BJ (cell line): ENCODE measurements at regions of chr17 and their contacts with region 1.

Region 1: GRCh38 chr17:27353461-27354050 is 59.6 kb downstream of the WSB1 start:
- DNase-seq: peak; percentile 46
- H3K4me3 ChIP-seq: peak overlapping the region; percentile 77
- H3K27me3 ChIP-seq: no peaks in the 10 kb centered on the region
- CTCF ChIP-seq: peak; percentile 18; the same call in 1 of the 2 replicates

Region 2: DNA sequence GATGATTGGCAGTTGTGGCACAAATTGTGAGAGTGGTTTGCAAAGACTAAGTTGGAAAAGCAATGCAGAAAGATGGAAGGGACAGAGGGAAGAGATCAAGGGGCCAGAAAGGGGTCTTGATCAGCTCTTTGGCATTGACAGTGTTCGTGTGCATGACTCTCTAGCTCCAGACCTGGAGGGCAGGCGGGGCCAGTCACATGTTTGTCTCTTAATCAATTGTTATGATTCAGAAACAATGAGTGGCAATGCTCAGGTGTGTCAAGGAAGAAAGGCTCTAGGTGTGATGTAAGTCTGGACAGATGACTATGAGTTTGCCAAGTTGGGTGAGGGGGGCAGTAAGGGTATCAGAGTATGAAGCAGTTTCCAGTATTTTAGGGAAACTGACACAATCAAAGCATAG is 27.5 kb before region 1 on chr17:
- CTCF ChIA-PET with region 1: no interaction called
- POLR2A ChIA-PET with region 1: no interaction called
- DNase-seq: no peak
- H3K4me3 ChIP-seq: no peak overlapping the region
- H3K27me3 ChIP-seq: no peaks in the 10 kb centered on the region
- CTCF ChIP-seq: no peak

Region 3: DNA sequence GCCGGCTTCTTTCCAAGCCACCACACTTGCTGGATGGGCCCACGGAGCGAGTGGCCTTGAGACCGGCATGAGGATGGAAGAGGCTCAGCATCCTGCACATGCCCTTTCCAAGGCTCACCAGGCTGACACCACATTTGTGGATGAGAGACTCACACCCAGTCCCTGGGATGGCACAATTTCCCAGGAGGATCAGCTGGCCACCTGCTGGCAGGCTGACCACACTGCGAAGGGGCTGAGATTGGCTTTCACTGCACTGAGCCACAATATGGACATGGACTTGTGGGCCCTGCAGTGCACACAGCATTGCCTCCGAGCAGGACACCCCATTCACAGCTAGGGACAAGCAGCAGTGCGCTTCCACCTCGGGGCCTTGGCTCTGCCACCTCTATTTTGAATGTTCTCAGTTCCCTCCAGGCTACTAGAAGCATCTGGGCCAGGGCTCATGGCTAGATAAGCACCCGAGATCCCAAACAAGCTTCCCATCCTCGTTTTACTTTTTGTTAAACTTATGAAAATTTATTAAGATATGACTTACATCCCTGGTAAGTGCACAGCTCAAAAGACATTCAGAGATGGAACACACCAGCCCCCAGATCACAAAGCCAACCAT is 77.4 kb after region 1 on chr17:
- CTCF ChIA-PET with region 1: interaction called, 23 read pairs
- POLR2A ChIA-PET with region 1: no interaction called
- DNase-seq: no peak
- H3K4me3 ChIP-seq: no peak overlapping the region
- H3K27me3 ChIP-seq: no peaks in the 10 kb centered on the region
- CTCF ChIP-seq: peak; percentile 85